B cell (primary cell): ENCODE measurements at regions of chr2 and their contacts with region 1.

Region 1: DNA sequence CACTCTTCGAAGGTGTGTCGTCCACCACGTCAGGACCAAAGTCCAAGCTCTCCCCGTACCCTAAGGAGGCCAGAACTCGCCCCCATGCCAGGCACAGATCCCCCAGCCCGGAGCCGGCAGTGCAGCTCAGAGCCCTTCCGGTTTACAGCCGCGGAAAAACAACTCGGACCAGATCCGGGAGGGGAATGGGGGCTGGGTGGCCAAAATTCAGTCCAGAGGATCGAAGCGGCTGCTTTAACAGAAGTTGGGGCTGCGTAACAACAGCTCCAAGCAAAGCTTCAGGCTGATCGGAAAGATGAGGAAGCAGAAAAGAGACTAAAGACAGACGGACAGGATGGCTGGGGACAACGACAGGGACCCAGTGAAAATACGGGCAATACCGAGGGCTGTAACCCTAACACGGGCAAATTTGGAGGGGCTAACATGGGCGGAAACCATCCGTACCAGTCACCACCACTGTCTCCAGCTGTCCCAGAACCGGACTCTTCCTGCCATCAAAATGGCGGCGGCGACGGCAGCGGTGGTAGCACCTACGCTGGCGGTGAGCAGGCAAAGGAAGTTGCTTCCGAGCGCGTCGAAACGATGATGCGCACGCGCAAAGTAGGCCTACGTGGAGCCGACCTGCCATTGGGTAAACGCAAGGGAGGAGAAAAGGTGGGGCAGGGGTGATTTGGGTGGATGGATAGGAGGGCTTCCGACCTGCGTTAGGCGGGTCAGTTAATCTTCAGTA is at the start of gene MMADHC:
- DNase-seq: peak; percentile 95
- ATAC-seq: peak; percentile 95
- H3K4me3 ChIP-seq: peak within 1 kb of the TSS; percentile 79 to 100 (median 97)
- H3K4me3 Mint-ChIP-seq: peak within 1 kb of the TSS; percentile 91
- H3K27ac ChIP-seq: peak within 1 kb of the TSS; percentile 91 to 97
- H3K27ac Mint-ChIP-seq: peak within 1 kb of the TSS; percentile 94
- H3K4me1 ChIP-seq: peaks cover 16 to 20% of the 10 kb centered on the region in 2 donors
- H3K4me1 Mint-ChIP-seq: peaks cover 37% of the 10 kb centered on the region
- H3K27me3 ChIP-seq: peaks cover 0 to 4% (median 0%) of the 10 kb centered on the region in 4 experiments
- H3K27me3 Mint-ChIP-seq: peaks cover 10% of the 10 kb centered on the region
- CTCF ChIP-seq: no peak
- total RNA-seq, gene MMADHC: 55.9 and 60.3 TPM in 2 replicates

Region 2: DNA sequence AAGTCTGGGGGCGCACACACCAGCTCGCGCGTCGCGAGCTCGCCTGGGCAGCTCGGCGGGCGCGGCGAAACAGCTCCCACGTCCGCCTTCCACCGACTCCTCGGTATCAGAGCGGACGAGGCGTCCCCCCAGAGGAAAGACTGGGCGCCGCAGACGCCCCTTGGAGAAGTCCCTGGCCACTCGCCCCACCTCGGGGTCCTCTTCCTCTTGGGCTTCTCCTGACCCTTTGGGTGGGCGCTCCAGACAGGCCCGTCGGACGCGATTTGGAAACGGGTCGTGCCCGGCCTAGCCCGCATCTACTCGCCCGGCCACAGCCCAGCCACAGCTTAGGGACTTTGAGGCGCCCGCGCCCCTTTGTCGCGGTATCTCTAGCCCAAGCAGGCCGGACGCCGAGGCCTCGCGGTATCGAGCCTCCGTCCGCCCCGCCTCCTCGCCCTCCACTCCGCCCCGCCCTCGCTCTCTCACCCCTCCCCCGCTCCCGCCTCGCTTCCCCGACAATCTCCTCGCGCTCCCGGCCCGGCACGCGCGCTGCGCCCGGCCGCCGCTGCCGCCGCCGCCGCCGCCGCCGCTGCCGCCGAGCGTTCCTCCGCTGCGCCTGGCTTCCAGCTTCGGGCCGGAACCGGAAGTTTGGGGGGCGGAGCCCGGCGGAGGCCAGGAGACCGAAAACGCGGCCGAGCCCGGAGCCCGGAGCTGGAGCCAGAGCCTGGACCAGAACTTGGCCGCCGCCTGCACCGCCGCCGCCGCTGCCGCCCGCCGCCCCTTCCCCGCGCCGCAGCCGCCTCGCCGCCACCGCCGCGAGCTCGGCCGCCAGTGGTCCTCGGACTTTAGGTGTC is 1743.3 kb before region 1 on chr2:
- CTCF ChIA-PET with region 1: no interaction called
- POLR2A ChIA-PET with region 1: no interaction called
- intact Hi-C with region 1: loop called (anchors 2 kb)
- DNase-seq: peak; percentile 91
- ATAC-seq: peak; percentile 87
- H3K4me3 ChIP-seq: peak overlapping the region; percentile 11 to 89 (median 69)
- H3K4me3 Mint-ChIP-seq: peak overlapping the region; percentile 95
- H3K27ac ChIP-seq: peak overlapping the region; percentile 29 to 56
- H3K27ac Mint-ChIP-seq: peak overlapping the region; percentile 86
- H3K4me1 ChIP-seq: peaks cover 19 to 21% of the 10 kb centered on the region in 2 donors
- H3K4me1 Mint-ChIP-seq: peaks cover 27% of the 10 kb centered on the region
- H3K27me3 ChIP-seq: peaks cover 0 to 29% (median 26%) of the 10 kb centered on the region in 4 experiments
- H3K27me3 Mint-ChIP-seq: peaks cover 51% of the 10 kb centered on the region
- CTCF ChIP-seq: no peak

Region 3: GRCh38 chr2:148644883-148645538 is 942.4 kb before region 1 on chr2:
- CTCF ChIA-PET with region 1: no interaction called
- POLR2A ChIA-PET with region 1: interaction called, 3 read pairs
- intact Hi-C with region 1: loop called (anchors 1 kb)
- DNase-seq: peak; percentile 99
- ATAC-seq: peak; percentile 78
- H3K4me3 ChIP-seq: peak overlapping the region; percentile 84 to 96 (median 93)
- H3K4me3 Mint-ChIP-seq: peak overlapping the region; percentile 97
- H3K27ac ChIP-seq: peak overlapping the region; percentile 92 to 94
- H3K27ac Mint-ChIP-seq: peak overlapping the region; percentile 98
- H3K4me1 ChIP-seq: peaks cover 19 to 25% of the 10 kb centered on the region in 2 donors
- H3K4me1 Mint-ChIP-seq: peaks cover 40% of the 10 kb centered on the region
- H3K27me3 ChIP-seq: no peaks in the 10 kb centered on the region
- H3K27me3 Mint-ChIP-seq: no peaks in the 10 kb centered on the region
- CTCF ChIP-seq: peak; percentile 22

Region 4: GRCh38 chr2:149720615-149721014 is 133.2 kb after region 1 on chr2:
- CTCF ChIA-PET with region 1: no interaction called
- POLR2A ChIA-PET with region 1: no interaction called
- intact Hi-C with region 1: no loop called
- DNase-seq: no peak
- ATAC-seq: no peak
- H3K4me3 ChIP-seq: no peak overlapping the region
- H3K4me3 Mint-ChIP-seq: no peak overlapping the region
- H3K27ac ChIP-seq: no peak overlapping the region
- H3K27ac Mint-ChIP-seq: no peak overlapping the region
- H3K4me1 ChIP-seq: no peaks in the 10 kb centered on the region
- H3K4me1 Mint-ChIP-seq: no peaks in the 10 kb centered on the region
- H3K27me3 ChIP-seq: no peaks in the 10 kb centered on the region
- H3K27me3 Mint-ChIP-seq: no peaks in the 10 kb centered on the region
- CTCF ChIP-seq: no peak

Region 5: GRCh38 chr2:151261231-151261976 is 1674.0 kb after region 1 on chr2 and contains the start of gene RBM43:
- CTCF ChIA-PET with region 1: no interaction called
- POLR2A ChIA-PET with region 1: interaction called, 6 read pairs
- intact Hi-C with region 1: loop called (anchors 1 kb)
- DNase-seq: peak; percentile 86
- ATAC-seq: peak; percentile 84
- H3K4me3 ChIP-seq: peak within 1 kb of the TSS; percentile 78 to 96 (median 85)
- H3K4me3 Mint-ChIP-seq: peak within 1 kb of the TSS; percentile 94
- H3K27ac ChIP-seq: peak within 1 kb of the TSS; percentile 88 to 91
- H3K27ac Mint-ChIP-seq: peak within 1 kb of the TSS; percentile 87
- H3K4me1 ChIP-seq: peaks cover 11 to 12% of the 10 kb centered on the region in 2 donors
- H3K4me1 Mint-ChIP-seq: peaks cover 23% of the 10 kb centered on the region
- H3K27me3 ChIP-seq: no peaks in the 10 kb centered on the region
- H3K27me3 Mint-ChIP-seq: no peaks in the 10 kb centered on the region
- CTCF ChIP-seq: no peak
- total RNA-seq, gene RBM43: 8.4 and 9.0 TPM in 2 replicates

Region 6: GRCh38 chr2:151409601-151410484 is 1822.5 kb after region 1 on chr2 and contains the start of gene RIF1:
- CTCF ChIA-PET with region 1: no interaction called
- POLR2A ChIA-PET with region 1: no interaction called
- intact Hi-C with region 1: loop called (anchors 5 kb)
- DNase-seq: peak; percentile 83
- ATAC-seq: peak; percentile 88
- H3K4me3 ChIP-seq: peak within 1 kb of the TSS; percentile 70 to 96 (median 95)
- H3K4me3 Mint-ChIP-seq: peak within 1 kb of the TSS; percentile 90
- H3K27ac ChIP-seq: peak within 1 kb of the TSS; percentile 78 to 93
- H3K27ac Mint-ChIP-seq: peak within 1 kb of the TSS; percentile 82
- H3K4me1 ChIP-seq: peaks cover 6 to 14% of the 10 kb centered on the region in 2 donors
- H3K4me1 Mint-ChIP-seq: peaks cover 19% of the 10 kb centered on the region
- H3K27me3 ChIP-seq: no peaks in the 10 kb centered on the region
- H3K27me3 Mint-ChIP-seq: no peaks in the 10 kb centered on the region
- CTCF ChIP-seq: peak; percentile 80
- total RNA-seq, gene RIF1: 60.5 and 65.5 TPM in 2 replicates